ENCODE measurements at regions of chr1 and their contacts with region 1.

Region 1: GRCh38 chr1:28877132-28877781 is 37.1 kb upstream of the EPB41 start:
- DNase-seq: peak; percentile 63 to 81 (median 68)
- H3K4me3 ChIP-seq: no peak overlapping the region
- H3K4me3 Mint-ChIP-seq: no peak overlapping the region
- H3K27ac ChIP-seq: no peak overlapping the region
- H3K27ac Mint-ChIP-seq: peak overlapping the region in 1 of 8 donors; percentile 41
- H3K4me1 ChIP-seq: peaks cover 6% of the 10 kb centered on the region
- H3K4me1 Mint-ChIP-seq: peaks cover 8 to 11% (median 10%) of the 10 kb centered on the region in 3 donors
- H3K27me3 ChIP-seq: no peaks in the 10 kb centered on the region
- H3K27me3 Mint-ChIP-seq: peaks cover 2 to 15% of the 10 kb centered on the region in 2 donors

Region 2: GRCh38 chr1:28354121-28354520 is 523.1 kb before region 1 on chr1:
- CTCF ChIA-PET with region 1: interaction called, 55 read pairs
- POLR2A ChIA-PET with region 1: no interaction called
- DNase-seq: no peak
- H3K4me3 ChIP-seq: no peak overlapping the region
- H3K4me3 Mint-ChIP-seq: no peak overlapping the region
- H3K27ac ChIP-seq: no peak overlapping the region
- H3K27ac Mint-ChIP-seq: no peak overlapping the region
- H3K4me1 ChIP-seq: no peaks in the 10 kb centered on the region
- H3K4me1 Mint-ChIP-seq: no peaks in the 10 kb centered on the region
- H3K27me3 ChIP-seq: no peaks in the 10 kb centered on the region
- H3K27me3 Mint-ChIP-seq: no peaks in the 10 kb centered on the region

Region 3: GRCh38 chr1:28642847-28643635 is 234.2 kb before region 1 on chr1 and contains the start of gene TAF12:
- CTCF ChIA-PET with region 1: interaction called, 13 read pairs
- POLR2A ChIA-PET with region 1: interaction called, 5 read pairs
- DNase-seq: peak; percentile 86 to 95 (median 89)
- H3K4me3 ChIP-seq: peak within 1 kb of the TSS; percentile 98
- H3K4me3 Mint-ChIP-seq: peak within 1 kb of the TSS; percentile 94 to 99 (median 98)
- H3K27ac ChIP-seq: peak within 1 kb of the TSS; percentile 91
- H3K27ac Mint-ChIP-seq: peak within 1 kb of the TSS; percentile 91 to 100 (median 98)
- H3K4me1 ChIP-seq: peaks cover 40% of the 10 kb centered on the region
- H3K4me1 Mint-ChIP-seq: peaks cover 46 to 67% (median 56%) of the 10 kb centered on the region in 3 donors
- H3K27me3 ChIP-seq: no peaks in the 10 kb centered on the region
- H3K27me3 Mint-ChIP-seq: peaks cover 0 to 4% of the 10 kb centered on the region in 2 donors
- total RNA-seq, gene TAF12: 37.8 to 39.0 TPM

Region 4: DNA sequence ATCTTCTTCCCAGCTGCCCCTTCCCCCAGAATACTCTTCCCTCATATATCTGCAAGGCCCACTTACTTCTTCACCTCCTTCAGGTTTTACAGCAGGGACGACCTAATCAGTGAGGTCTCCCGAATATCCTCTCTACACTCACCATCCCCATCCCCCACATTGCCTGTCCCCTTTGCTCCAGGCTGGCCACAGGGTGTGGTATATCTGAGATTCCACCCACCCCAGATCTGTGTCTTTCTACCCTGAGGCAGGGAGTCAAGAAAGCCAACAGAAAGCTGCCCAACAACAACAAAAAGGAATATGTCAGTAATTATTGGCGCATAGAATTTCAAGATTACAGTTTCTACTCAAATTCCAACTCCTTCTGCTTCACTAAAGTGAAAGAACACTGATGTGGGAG is 95.2 kb before region 1 on chr1:
- CTCF ChIA-PET with region 1: interaction called, 87 read pairs
- POLR2A ChIA-PET with region 1: no interaction called
- DNase-seq: no peak
- H3K4me3 ChIP-seq: no peak overlapping the region
- H3K4me3 Mint-ChIP-seq: peak overlapping the region in 1 of 7 donors; percentile 12
- H3K27ac ChIP-seq: no peak overlapping the region
- H3K27ac Mint-ChIP-seq: no peak overlapping the region
- H3K4me1 ChIP-seq: no peaks in the 10 kb centered on the region
- H3K4me1 Mint-ChIP-seq: peaks cover 6 to 9% (median 8%) of the 10 kb centered on the region in 3 donors
- H3K27me3 ChIP-seq: no peaks in the 10 kb centered on the region
- H3K27me3 Mint-ChIP-seq: no peaks in the 10 kb centered on the region

Region 5: DNA sequence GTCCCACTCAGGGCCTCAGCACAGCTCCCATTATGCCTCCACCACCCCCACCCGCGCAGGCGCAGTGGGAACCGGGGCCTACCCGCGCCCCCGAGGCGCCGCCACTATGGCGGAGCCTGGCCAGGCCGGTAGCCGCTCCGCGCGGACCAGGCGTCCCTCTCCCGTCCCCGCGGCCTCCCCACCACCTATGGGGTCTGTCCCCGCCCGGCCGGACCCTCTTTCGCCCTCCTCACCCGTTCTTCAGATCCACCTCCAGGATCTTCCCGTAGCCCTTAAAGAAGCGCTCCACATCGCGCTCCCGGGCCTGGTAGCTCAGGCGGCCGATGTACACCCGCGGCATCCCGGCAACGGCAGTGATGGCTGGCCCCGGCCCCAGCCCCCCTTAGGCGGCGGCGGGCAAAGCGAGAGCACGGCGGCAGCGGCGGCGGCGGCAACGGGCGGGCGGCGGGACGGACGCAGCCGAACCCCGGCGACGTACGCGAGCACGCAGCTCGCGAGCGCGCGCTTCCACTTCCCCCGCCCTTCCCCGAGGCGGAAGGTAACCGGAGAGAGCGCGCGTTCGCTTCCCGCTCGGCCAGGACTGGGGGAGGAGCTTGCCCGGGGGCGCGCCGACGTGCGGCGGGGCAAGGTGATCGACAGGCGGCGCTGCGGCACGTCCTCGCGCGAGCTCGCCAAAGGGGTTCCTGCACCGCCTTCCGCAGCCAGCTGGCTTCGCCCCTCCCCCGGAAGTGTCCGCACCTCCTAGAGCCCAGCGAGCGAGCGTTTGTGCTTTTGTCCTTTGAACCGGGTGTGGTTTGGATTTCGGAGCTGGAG is 304.4 kb after region 1 on chr1 and contains the start of gene SRSF4:
- CTCF ChIA-PET with region 1: interaction called, 10 read pairs
- POLR2A ChIA-PET with region 1: no interaction called
- DNase-seq: peak; percentile 98 to 100 (median 99)
- H3K4me3 ChIP-seq: peak within 1 kb of the TSS; percentile 85
- H3K4me3 Mint-ChIP-seq: peak within 1 kb of the TSS; percentile 91 to 97 (median 94)
- H3K27ac ChIP-seq: peak within 1 kb of the TSS; percentile 97
- H3K27ac Mint-ChIP-seq: peak within 1 kb of the TSS; percentile 93 to 97 (median 96)
- H3K4me1 ChIP-seq: peaks cover 46% of the 10 kb centered on the region
- H3K4me1 Mint-ChIP-seq: peaks cover 41 to 57% (median 55%) of the 10 kb centered on the region in 3 donors
- H3K27me3 ChIP-seq: no peaks in the 10 kb centered on the region
- H3K27me3 Mint-ChIP-seq: no peaks in the 10 kb centered on the region
- total RNA-seq, gene SRSF4: 112 to 119 TPM

Measured in CD8-positive, alpha-beta memory T cell (primary cell).